ENCODE measurements at regions of chr17 and their contacts with region 1.

Region 1: DNA sequence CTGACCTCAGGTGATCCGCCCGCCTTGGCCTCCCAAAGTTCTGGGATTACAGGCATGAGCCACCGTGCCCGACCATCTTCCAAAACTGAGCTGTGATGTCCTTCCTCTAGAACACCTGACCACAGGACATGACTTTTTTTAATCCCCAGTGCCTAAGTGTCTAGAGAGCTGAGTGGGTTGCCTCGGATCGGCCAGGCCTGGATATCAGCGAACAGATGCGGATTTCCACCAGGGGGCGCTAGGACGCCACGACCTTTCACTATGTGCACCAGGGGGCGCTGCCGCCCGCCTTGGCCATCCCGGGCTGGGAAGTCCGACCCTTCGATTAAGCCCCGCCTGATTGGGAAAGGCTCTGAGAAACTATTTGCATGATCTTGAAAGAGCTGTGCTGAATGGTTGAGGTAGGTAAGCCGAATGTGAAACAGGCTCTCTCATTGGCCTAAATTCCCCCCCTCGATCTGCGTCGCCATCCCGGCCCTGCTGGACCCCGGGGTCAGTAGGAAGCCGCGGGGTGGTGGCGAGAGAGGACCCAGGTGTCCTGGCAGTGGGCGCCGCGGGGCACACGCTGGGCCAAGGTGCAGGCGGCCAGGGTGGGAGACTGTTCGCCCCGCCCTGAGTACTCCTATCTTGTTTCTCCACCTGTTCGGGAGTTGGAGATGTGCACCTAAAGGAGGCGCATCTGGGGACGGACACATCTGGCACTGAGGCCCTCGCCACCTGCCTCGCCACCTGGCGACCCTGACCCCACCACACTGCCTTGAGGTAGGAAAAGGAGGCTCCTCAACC is at the start of gene ACBD4:
- H3K4me3 ChIP-seq: peak within 1 kb of the TSS; percentile 67
- H3K27ac ChIP-seq: peak within 1 kb of the TSS; percentile 4; the same call in 1 of the 2 replicates
- H3K4me1 ChIP-seq: peaks cover 7% of the 10 kb centered on the region; the same call in 1 of the 2 replicates
- CTCF ChIP-seq: peak; percentile 100

Region 2: DNA sequence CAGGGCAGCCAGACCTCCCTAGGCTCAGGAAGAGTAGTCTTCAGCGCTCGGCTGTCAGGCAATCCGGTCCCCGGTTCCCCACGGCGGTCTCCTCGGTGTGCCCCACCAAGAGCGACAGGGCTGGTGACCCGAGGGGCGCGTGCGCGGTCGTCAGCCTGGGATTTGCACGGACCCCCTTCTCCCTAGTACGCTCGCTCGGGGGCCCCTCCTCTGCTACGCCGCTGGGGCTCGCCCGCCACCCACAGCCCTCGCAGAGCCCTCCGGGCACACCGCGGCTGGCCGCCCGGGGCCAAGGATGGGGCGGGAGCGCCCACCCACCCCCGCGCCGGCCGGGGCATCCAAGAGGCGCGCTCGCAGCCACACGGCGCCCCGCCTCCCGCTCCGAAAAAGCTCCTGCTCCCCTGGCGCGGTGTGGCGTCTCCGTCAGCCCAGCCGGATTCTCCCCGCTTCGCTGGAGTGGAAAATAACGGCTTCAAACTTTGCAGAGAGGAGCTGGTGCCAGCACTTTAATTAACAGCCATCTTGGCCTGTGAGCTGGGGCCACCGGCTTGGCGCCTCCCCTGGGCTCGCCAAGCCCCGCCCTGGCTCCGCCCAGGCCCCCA is 165.1 kb before region 1 on chr17:
- CTCF ChIA-PET with region 1: no interaction called
- POLR2A ChIA-PET with region 1: no interaction called
- H3K4me3 ChIP-seq: peak overlapping the region; percentile 19
- H3K27ac ChIP-seq: no peak overlapping the region; the same call in 1 of the 2 replicates
- H3K4me1 ChIP-seq: peaks cover 3% of the 10 kb centered on the region
- CTCF ChIP-seq: no peak

Region 3: DNA sequence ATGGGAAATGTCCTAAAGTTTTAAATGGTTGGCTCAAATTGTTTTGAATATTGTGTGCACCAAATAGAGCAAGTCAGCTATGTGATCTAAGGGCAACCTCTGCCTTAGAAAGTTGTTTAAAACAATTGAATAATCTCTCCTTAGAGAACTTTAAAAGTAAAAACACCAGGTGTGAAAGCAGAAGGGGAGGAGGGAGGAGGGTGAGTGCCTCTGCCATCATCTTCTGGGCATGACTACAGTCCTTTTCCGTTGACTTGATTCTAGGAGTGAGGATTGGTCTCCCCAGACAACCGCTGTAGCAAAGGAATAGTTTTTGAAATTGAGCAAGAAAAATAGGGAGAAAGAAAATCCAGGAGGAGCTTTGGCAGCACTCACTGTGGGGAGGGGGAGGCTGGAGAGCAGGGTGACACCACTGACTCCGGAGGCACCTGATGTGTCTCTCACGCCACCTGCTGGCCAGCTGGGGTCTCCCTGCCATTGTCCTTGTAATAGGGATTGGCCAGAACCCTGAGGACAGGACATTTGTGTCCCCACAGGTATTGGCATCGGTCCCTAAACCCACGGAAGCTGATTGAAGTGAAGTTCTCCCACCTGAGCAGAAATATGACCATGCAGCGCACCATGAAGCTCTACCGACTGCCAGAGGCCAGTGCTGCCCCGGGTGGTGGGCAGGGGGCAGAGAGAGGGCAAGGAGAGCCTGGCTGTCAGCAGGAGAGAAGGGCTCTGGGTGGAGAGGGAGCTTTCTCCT is 36.3 kb before region 1 on chr17:
- CTCF ChIA-PET with region 1: interaction called, 17 read pairs
- POLR2A ChIA-PET with region 1: no interaction called
- H3K4me3 ChIP-seq: no peak overlapping the region
- H3K27ac ChIP-seq: no peak overlapping the region
- H3K4me1 ChIP-seq: no peaks in the 10 kb centered on the region
- CTCF ChIP-seq: peak; percentile 88

Region 4: DNA sequence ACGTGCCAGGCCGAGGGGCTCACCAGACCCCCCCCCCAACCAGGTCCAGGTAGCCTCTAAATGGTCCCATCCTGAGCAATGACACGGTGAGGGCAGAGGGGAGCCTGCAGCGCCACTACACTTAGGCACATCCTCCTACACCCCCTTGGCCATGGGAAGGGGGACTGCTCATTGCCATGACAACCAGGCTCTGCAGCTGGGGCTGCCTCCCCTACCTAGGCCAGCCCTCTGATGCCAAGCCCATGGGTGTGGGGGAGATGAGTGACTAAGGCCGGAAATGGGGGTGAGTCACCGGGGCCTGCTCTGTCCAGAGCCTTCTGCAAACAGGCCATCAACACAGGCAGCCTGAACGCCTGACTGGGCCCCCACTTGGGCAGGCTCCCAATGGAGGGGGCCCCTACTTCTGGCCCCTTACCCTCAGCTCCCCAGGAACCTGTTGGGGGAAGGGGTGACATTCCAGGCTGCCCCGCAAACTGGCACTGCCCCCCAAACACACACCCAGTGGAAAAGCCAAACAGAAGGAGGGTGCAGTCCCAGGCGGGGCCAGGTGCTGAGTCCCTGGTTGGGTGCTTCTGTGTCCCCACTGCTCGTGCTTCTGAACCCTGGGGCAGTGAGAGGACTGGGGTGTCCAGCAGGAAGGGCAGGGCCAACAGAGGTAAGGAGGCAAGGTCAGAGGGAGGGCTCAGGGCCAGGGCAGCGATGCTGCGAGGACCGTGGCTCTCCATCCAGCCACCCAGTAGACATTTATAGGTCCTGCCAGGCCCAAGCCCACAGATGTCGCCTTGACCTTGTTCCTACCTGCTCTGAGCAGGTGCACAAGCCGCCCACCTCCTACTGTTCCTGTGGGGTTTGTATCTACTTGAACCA is 11.2 kb before region 1 on chr17:
- CTCF ChIA-PET with region 1: interaction called, 36 read pairs
- POLR2A ChIA-PET with region 1: no interaction called
- H3K4me3 ChIP-seq: no peak overlapping the region
- H3K27ac ChIP-seq: no peak overlapping the region
- H3K4me1 ChIP-seq: peaks cover 7% of the 10 kb centered on the region
- CTCF ChIP-seq: no peak

Region 5: GRCh38 chr17:45172454-45173286 is 37.3 kb after region 1 on chr17:
- CTCF ChIA-PET with region 1: interaction called, 22 read pairs
- POLR2A ChIA-PET with region 1: interaction called, 5 read pairs
- H3K4me3 ChIP-seq: no peak overlapping the region
- H3K27ac ChIP-seq: peak overlapping the region; percentile 34
- H3K4me1 ChIP-seq: peaks cover 23% of the 10 kb centered on the region
- CTCF ChIP-seq: 0 out of 2 replicates have a peak, but pooled peaks have one; percentile 41

Region 6: DNA sequence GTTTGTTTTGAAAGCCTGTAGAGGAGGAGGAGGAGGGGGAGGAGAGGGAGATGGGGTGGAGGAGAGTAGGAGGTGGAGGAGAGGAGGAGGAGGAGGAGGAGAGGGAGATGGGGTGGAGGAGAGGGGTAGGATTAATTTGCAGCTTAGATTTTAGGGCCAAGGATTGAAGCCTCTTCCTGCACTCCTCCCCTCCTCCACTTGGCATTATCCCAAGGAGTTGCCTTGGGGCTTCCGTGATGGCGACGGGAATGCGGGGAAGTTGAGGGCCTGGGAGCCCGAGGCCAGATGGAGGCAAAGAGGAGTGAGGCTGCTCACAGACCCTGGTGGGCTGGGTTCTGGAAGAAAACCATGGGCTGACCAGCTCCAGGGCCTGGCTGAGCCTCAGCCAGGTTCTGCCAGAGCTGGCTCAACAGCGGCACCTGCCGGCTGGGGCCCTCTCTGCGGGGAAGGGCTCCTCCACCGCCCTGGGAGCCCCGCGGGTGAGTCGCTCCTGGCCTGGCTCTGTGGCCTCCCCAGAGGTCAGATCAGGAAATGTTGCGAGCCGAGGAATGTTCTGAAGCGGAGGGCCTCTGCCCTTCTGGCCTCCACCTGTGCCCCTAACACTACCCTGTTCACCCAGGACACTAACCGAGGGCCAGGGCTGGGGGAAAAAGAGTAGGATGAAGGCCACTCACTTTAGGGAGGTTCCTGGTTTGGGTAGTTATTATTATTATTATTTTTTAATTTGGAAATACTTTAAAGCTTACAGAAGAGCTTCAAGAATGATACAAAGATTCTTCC is 62.4 kb after region 1 on chr17:
- CTCF ChIA-PET with region 1: interaction called, 301 read pairs
- POLR2A ChIA-PET with region 1: interaction called, 29 read pairs
- H3K4me3 ChIP-seq: no peak overlapping the region
- H3K27ac ChIP-seq: peak overlapping the region; percentile 34
- H3K4me1 ChIP-seq: peaks cover 6% of the 10 kb centered on the region
- CTCF ChIP-seq: peak; percentile 99

Region 7: GRCh38 chr17:45235416-45236281 is 100.3 kb after region 1 on chr17:
- CTCF ChIA-PET with region 1: interaction called, 32 read pairs
- POLR2A ChIA-PET with region 1: no interaction called
- H3K4me3 ChIP-seq: no peak overlapping the region
- H3K27ac ChIP-seq: no peak overlapping the region
- H3K4me1 ChIP-seq: no peaks in the 10 kb centered on the region
- CTCF ChIP-seq: peak; percentile 66

Measured in HEK293 (cell line).